ENCODE measurements at regions of chr2 and their contacts with region 1.

Region 1: GRCh38 chr2:113157118-113157896 is 16.5 kb upstream of the PSD4 start:
- DNase-seq: peak; percentile 55
- H3K4me3 Mint-ChIP-seq: peak overlapping the region; percentile 86
- H3K27ac Mint-ChIP-seq: peak overlapping the region; percentile 90
- H3K4me1 Mint-ChIP-seq: peaks cover 26% of the 10 kb centered on the region
- H3K27me3 Mint-ChIP-seq: peaks cover 6% of the 10 kb centered on the region

Region 2: DNA sequence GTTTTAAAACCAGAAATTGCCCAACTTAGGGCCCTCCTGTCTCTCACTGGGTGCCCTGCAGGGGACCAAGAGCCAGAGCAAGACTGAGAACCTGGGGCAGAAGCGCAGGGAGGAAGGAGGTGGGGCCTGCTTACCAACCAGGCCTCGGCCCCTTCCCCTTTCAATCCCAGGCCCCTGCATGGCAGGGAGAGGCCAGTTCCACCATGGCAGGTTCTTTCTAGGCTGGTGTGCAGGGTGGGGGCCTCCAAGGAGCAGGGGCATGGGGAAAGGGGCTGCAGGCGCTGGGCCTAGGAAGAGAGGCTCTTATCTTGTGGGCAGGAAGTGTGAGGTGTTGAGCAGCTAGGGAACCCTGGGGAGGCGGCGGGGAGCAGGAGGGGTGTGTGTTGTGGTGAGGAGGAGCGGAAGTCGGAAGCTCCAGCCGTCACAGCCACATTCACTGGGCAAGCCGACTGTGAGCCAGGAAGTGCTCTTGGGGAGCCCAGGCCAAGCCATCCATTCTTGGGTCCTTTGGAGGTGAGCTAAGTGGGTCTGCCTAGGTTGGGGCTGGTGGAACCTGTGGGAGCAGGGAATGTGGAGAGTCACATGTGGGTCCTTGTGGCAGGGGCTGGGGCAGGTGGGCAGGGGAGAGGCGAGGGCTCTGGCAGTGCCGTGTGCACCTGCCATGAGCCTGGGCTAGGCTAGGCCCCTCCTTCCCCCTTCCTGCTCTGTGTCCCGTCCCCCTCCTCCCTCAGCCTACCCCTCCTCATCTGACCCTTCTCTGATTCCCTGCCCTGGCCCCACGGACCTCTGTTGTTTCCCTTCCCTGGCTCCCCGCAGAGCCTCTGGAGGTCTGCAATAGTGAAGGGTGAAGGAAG is 16.5 kb after region 1 on chr2 and contains the start of gene PSD4:
- CTCF ChIA-PET with region 1: interaction called, 14 read pairs
- POLR2A ChIA-PET with region 1: interaction called, 6 read pairs
- DNase-seq: peak; percentile 94
- H3K4me3 Mint-ChIP-seq: peak within 1 kb of the TSS; percentile 84
- H3K27ac Mint-ChIP-seq: peak within 1 kb of the TSS; percentile 88
- H3K4me1 Mint-ChIP-seq: peaks cover 73% of the 10 kb centered on the region
- H3K27me3 Mint-ChIP-seq: peaks cover 2% of the 10 kb centered on the region
- total RNA-seq, gene PSD4: 329 to 335 TPM